Mammary epithelial cell (primary cell): ENCODE measurements at regions of chr2 and their contacts with region 1.

Region 1: GRCh38 chr2:36197181-36197971 is 158.2 kb upstream of the CRIM1 start:
- DNase-seq: no peak
- H3K4me3 ChIP-seq: no peak overlapping the region
- H3K27ac ChIP-seq: no peak overlapping the region
- H3K4me1 ChIP-seq: no peaks in the 10 kb centered on the region
- H3K27me3 ChIP-seq: no peaks in the 10 kb centered on the region
- CTCF ChIP-seq: no peak

Region 2: DNA sequence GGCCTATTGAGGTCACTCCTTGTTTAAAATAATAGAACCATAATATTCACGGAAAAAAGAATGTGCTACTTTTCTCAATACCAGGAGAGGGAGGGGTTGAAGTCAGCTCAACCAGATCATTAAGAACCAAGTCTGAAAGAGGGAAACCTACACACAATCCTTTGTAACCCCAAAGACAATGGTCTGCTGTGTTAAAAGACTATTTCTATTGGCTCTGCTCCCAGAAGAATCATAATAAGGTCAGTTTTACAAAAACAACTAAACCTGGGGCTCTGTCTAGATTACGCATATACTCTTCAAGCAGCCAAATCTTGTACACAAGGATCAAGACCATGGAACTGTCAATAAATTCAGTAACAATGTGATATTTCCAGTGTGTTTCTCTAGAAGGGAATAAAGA is 19.0 kb before region 1 on chr2:
- CTCF ChIA-PET with region 1: no interaction called
- dilution Hi-C with region 1: no loop called
- in situ Hi-C with region 1: no loop called
- intact Hi-C with region 1: no loop called
- DNase-seq: peak; percentile 81
- H3K4me3 ChIP-seq: no peak overlapping the region
- H3K27ac ChIP-seq: peak overlapping the region; percentile 57
- H3K4me1 ChIP-seq: peaks cover 27% of the 10 kb centered on the region
- H3K27me3 ChIP-seq: no peaks in the 10 kb centered on the region
- CTCF ChIP-seq: no peak

Region 3: DNA sequence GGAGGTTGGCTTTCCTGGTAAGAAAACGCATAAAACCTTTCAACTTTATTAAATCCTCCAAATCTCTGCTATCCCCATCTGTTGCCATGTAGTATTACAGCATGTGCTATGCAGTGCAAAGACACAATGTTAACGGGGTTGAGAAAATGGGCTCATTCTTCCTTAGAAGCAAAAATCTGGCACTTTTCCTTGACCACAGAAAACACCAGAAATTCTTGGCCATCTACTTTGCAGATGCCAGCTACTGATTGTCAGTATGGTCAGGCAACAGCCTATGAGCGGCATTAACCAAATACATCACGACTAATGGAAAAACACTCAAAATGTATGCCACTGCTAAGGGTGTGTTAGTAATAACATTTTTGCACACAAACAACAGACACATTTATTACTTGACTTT is 92.9 kb after region 1 on chr2:
- CTCF ChIA-PET with region 1: no interaction called
- dilution Hi-C with region 1: loop called (anchors 5 kb)
- in situ Hi-C with region 1: no loop called
- intact Hi-C with region 1: no loop called
- DNase-seq: no peak
- H3K4me3 ChIP-seq: no peak overlapping the region
- H3K27ac ChIP-seq: no peak overlapping the region
- H3K4me1 ChIP-seq: no peaks in the 10 kb centered on the region
- H3K27me3 ChIP-seq: no peaks in the 10 kb centered on the region
- CTCF ChIP-seq: peak in 1 of 2 donors; percentile 11